Heart left ventricle (tissue), 16 donors: ENCODE measurements at regions of chr7 and their contacts with region 1.

Region 1: DNA sequence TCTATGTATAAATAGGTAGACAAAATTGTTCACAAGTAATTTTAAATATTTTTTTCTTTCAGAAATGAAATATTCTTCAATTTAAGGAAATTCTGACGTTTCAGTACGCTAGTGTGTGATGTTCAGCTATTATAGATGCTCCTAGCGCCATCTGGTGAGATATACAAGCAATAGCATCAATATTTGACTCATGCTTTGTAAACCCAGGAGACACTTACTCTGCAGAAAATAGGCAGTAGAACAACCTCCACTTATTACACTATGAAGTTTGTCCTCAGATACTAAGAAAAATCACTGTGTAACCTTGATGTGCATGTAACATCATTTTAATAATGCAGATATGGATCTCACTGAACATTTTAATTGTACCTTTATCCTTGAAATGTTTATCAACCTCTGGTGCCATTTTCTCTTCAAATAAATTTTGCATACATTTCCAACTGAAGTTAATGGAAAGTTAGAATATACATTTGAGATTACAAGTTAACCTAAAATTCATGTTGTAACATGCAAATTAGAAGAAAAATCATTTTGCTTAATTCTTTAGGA is 151.5 kb upstream of the FAM3C start:
- DNase-seq: no peak
- ATAC-seq: peak in 3 of 4 donors; percentile 50 to 78 (median 63)
- H3K4me3 ChIP-seq: no peak overlapping the region
- H3K27ac ChIP-seq: no peak overlapping the region
- H3K4me1 ChIP-seq: peaks cover 0 to 4% (median 0%) of the 10 kb centered on the region in 12 donors
- H3K27me3 ChIP-seq: no peaks in the 10 kb centered on the region
- CTCF ChIP-seq: peak; percentile 60 to 87 (median 80)
- POLR2A ChIP-seq: no peak

Region 2: DNA sequence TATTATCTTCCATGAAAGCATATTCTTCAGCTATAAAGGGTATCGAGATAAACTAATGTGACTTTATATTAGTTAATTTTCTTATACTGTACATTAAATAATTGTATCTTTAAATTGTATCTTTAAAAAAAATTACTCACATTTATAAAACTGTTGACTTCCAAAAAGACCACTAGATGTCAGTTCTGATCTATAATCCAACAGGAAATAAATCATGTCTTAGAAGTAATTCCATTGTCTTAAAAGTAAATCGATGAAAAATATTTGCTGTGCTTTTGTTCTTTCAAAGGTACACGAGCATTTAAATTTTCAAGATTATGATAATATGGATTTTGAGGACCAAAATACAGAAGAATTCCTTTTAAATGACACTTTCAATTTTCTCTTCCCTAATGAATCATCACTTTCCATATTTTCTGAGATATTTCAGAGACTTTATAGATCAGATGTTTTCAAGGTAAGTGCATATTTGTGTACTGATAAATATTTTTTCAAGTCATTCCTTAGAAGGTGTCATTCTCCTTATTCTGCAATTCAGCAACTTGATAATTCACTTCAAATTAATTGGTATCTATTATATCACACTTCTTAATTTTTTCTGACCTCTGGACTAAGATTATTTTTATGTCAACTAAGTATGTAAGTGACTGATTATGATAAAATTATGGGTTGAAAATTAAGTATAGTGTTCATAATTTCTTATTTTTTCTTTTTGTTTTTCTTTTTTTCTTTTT is 420.6 kb before region 1 on chr7:
- intact Hi-C with region 1: loop called in 1 of 10 experiments (anchors 5 kb)
- DNase-seq: no peak
- ATAC-seq: no peak
- H3K4me3 ChIP-seq: no peak overlapping the region
- H3K27ac ChIP-seq: no peak overlapping the region
- H3K4me1 ChIP-seq: no peaks in the 10 kb centered on the region
- H3K27me3 ChIP-seq: no peaks in the 10 kb centered on the region
- CTCF ChIP-seq: peak in 4 of 12 donors; percentile 19 to 40 (median 34)
- POLR2A ChIP-seq: no peak